ENCODE measurements at regions of chr1 and their contacts with region 1.

Region 1: DNA sequence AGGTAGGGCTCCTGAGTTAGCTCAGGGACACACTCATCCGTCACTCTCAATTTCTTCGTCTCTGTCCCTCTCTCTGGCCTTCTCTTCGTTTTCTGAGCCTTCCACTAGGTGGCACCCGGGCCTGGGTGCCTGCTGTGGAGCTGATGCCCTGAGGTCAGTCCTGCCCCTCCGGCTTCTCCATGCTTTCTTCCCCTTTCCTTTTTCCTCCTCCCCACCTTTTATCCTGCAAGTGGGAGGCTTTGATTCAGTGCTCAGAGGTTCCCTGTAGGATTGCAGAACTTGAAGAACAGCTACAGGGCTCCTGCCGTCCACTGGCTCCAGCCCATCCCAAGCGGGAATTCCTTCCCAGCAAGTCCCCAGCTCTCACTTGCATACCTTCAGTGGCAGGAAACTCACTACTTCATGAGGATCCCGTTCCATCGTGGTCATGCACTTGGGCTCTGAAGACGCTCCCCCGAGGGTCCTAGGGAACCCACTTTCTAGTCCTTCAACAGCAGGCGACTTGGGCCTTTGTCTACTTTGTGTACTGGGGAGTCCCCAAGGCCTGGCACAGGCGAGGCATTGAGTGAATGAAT is 45.6 kb downstream of the SRRM1 start:
- DNase-seq: no peak
- ATAC-seq: peak; percentile 94
- H3K4me3 ChIP-seq: no peak overlapping the region
- H3K27ac ChIP-seq: no peak overlapping the region
- H3K4me1 ChIP-seq: peaks cover 5% of the 10 kb centered on the region; the same call in 1 of the 2 replicates
- H3K27me3 ChIP-seq: no peaks in the 10 kb centered on the region
- CTCF ChIP-seq: peak; percentile 95

Region 2: DNA sequence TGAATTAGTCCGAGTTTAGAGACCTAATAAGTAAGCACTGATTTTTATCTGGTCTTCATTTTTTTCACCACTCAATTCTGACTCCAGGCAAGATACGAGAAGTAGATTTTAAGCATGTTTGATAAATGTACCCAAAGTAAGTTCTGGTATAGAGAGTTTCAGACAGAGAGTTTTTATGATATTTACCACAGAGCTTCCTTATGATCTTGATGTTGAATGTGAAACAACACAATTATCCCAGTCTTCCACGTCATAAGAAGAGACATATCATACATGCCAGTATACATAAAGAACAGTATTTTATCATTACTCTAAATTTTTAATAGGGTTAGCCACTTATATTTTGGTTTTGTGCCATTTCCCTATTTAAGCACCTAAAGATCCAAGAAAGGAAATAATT is 140.6 kb before region 1 on chr1:
- CTCF ChIA-PET with region 1: interaction called, 10 read pairs
- POLR2A ChIA-PET with region 1: no interaction called
- in situ Hi-C with region 1: no loop called
- intact Hi-C with region 1: no loop called
- DNase-seq: no peak
- ATAC-seq: no peak
- H3K4me3 ChIP-seq: no peak overlapping the region
- H3K27ac ChIP-seq: no peak overlapping the region
- H3K4me1 ChIP-seq: no peaks in the 10 kb centered on the region
- H3K27me3 ChIP-seq: no peaks in the 10 kb centered on the region
- CTCF ChIP-seq: no peak

Region 3: GRCh38 chr1:24705260-24706073 is 16.8 kb after region 1 on chr1:
- CTCF ChIA-PET with region 1: interaction called, 3 read pairs
- POLR2A ChIA-PET with region 1: interaction called, 11 read pairs
- in situ Hi-C with region 1: no loop called
- intact Hi-C with region 1: no loop called
- DNase-seq: peak; percentile 78
- ATAC-seq: peak; percentile 96
- H3K4me3 ChIP-seq: peak overlapping the region; percentile 31 to 66
- H3K27ac ChIP-seq: peak overlapping the region; percentile 69
- H3K4me1 ChIP-seq: peaks cover 21% of the 10 kb centered on the region
- H3K27me3 ChIP-seq: no peaks in the 10 kb centered on the region
- CTCF ChIP-seq: no peak

Region 4: GRCh38 chr1:24744911-24745710 is 56.4 kb after region 1 on chr1 and contains the start of gene CLIC4:
- CTCF ChIA-PET with region 1: interaction called, 12 read pairs
- POLR2A ChIA-PET with region 1: interaction called, 4 read pairs
- in situ Hi-C with region 1: no loop called
- intact Hi-C with region 1: loop called (anchors 10 kb)
- DNase-seq: peak; percentile 93
- ATAC-seq: peak; percentile 95
- H3K4me3 ChIP-seq: peak within 1 kb of the TSS; percentile 81 to 97
- H3K27ac ChIP-seq: peak within 1 kb of the TSS; percentile 88
- H3K4me1 ChIP-seq: peaks cover 23% of the 10 kb centered on the region
- H3K27me3 ChIP-seq: no peaks in the 10 kb centered on the region
- CTCF ChIP-seq: no peak; the same call in 1 of the 2 replicates
- total RNA-seq, gene CLIC4: 123 TPM

Measured in Panc1 (cell line).